ENCODE measurements at regions of chr19 and their contacts with region 1.

Region 1: DNA sequence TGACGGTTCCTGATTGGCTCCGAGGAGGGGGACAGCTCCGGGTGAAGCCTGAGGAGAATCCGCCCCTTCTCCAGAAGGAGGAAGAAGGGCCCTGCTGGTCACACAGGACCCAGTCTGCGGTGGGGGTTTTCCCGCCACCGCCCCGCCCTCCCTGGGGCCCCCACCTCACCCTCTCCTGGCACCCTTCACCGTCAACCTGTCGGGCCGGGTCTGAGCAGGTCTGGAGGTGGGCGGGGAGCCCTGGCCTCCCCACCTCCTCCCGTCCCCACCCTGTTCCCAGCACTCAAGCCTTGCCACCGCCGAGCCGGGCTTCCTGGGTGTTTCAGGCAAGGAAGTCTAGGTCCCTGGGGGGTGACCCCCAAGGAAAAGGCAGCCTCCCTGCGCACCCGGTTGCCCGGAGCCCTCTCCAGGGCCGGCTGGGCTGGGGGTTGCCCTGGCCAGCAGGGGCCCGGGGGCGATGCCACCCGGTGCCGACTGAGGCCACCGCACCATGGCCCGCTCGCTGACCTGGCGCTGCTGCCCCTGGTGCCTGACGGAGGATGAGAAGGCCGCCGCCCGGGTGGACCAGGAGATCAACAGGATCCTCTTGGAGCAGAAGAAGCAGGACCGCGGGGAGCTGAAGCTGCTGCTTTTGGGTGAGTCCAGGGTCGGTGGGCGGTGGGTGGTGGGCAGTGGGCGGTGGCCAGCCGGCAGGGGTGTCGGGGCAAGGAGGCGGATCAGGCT is at the start of gene GNA15:
- DNase-seq: peak in 1 of 2 experiments; percentile 64
- H3K4me3 ChIP-seq: peak within 1 kb of the TSS; percentile 68
- H3K27ac ChIP-seq: peak within 1 kb of the TSS; percentile 56
- H3K4me1 ChIP-seq: no peaks in the 10 kb centered on the region; the same call in 1 of the 2 replicates
- H3K27me3 ChIP-seq: no peaks in the 10 kb centered on the region
- CTCF ChIP-seq: no peak
- total RNA-seq, gene GNA15: 14.2 and 16.3 TPM in 2 replicates

Region 2: DNA sequence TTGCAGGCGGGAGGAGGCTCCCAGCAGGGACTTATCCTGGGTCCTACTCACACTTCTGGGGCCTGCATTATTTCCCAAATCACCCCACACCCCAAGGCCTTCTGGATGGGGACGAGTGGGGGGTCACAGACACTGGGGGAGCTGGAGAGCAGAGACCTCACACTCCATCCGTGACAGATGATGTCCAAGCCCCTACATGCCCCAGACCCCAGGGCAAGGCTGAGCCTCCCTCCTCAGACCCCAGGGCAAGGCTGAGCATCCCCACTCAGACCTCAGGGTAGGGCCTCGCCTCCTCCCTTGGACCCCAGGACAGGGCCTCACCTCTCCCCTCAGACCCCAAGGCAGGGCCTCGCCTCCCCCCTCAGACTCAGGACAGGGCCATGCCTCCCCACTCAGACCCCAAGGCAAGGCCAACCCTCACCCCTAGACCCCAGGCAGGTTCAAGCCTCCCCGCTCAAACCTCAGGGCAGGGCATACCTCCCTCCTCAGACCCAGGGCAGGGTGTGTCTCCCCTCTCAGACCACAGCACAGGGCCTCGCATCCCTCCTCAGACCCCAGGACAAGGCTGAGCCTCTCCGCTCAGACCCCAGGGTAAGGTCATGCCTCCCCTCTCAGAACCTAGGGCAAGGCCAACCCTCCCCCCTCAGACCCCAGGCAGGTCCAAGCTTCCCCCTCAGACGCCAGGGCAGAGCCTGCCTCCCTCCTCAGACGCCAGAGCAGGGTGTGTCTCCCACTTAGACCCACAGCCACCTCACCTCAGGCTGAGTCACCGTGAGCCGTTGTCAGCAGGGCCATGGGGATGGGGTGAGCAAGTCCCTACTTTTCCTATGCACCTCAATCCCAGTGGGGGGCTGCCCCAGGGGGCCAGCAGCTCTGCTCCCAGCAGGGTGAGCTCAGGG is 40.7 kb after region 1 on chr19:
- CTCF ChIA-PET with region 1: interaction called, 5 read pairs
- POLR2A ChIA-PET with region 1: interaction called, 8 read pairs
- intact Hi-C with region 1: loop called (anchors 5 kb)
- DNase-seq: peak; percentile 75 to 80
- H3K4me3 ChIP-seq: peak overlapping the region; percentile 24; the same call in 1 of the 2 replicates
- H3K27ac ChIP-seq: peak overlapping the region; percentile 96
- H3K4me1 ChIP-seq: peaks cover 21% of the 10 kb centered on the region
- H3K27me3 ChIP-seq: no peaks in the 10 kb centered on the region
- CTCF ChIP-seq: no peak